ENCODE measurements at regions of chr3 and their contacts with region 1.

Region 1: DNA sequence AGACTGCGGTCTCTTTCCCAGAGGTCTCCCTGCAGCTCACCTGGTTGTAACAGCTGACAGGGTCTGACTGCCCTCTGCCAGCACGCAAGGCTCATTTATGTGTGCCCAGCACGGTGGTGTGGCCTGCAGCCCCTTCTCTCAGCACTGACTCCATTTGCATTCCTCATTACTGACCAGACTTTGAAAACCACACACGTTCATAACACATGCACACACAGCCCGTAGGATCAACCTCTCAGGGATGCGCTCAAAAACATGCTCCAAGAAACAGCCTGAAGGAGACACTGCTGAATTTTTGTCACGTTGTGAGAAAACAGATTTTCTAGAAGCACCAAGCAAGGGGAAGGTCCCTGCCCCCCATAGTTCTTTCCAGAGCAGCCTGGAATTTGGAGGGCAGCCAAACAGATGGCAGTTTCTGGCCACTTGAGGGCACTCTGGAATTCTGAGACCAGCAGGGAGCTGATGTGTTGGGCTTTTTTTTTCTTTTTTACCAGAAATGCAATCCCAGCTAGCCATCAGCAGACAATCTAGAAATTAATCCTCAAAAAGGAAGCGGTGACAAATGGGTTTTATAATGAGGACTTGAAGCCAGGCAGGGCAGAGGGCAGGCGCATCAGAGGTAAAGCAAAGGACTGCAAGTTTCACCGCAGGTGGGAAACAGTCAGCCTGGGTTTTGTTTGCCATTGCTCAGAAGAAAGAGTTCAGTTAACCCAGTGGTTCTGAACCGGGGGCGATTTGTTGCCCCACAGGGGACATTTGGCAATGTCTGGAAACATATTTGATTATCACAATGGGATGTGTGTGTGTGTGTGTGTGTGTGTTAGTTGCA is 170.5 kb upstream of the PROK2 start:
- DNase-seq: peak; percentile 93
- H3K4me3 ChIP-seq: no peak overlapping the region
- H3K27ac ChIP-seq: no peak overlapping the region
- H3K4me1 ChIP-seq: peaks cover 6 to 12% (median 10%) of the 10 kb centered on the region in 4 donors
- H3K27me3 ChIP-seq: no peaks in the 10 kb centered on the region
- CTCF ChIP-seq: peak; percentile 74 to 79 (median 74)
- EP300 ChIP-seq: no peak
- POLR2A ChIP-seq: no peak

Region 2: GRCh38 chr3:71831599-71831998 is 123.9 kb before region 1 on chr3:
- intact Hi-C with region 1: no loop called
- DNase-seq: no peak
- H3K4me3 ChIP-seq: no peak overlapping the region
- H3K27ac ChIP-seq: no peak overlapping the region
- H3K4me1 ChIP-seq: no peaks in the 10 kb centered on the region
- H3K27me3 ChIP-seq: no peaks in the 10 kb centered on the region
- CTCF ChIP-seq: no peak
- EP300 ChIP-seq: no peak
- POLR2A ChIP-seq: no peak

Region 3: DNA sequence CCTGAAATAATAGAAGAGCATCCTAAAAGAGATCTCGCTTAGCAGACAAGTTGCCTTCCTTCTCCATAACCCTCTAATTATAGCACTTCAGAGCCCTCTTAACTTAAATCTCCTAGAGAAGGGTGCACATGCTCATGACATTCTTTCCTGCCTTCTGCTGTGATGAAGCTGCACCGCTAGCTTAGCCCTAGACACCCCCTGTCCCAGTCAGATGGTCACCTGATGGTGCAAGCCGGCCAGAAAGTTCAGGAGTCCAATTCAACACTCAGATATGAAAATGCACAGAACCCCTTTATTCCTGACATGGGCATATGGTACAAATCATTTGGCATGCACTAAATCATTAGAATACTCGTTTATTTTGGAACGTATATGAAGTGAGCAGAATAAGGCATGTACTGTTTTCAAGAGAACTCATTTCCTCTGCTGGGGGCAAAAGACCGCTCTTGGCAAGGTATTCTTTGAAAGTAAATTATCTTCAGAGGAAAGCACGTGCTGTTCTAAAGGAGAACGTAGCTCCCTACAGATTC is 249.9 kb after region 1 on chr3:
- intact Hi-C with region 1: loop called (anchors 10 kb)
- DNase-seq: no peak
- H3K4me3 ChIP-seq: no peak overlapping the region
- H3K27ac ChIP-seq: no peak overlapping the region
- H3K4me1 ChIP-seq: no peaks in the 10 kb centered on the region
- H3K27me3 ChIP-seq: no peaks in the 10 kb centered on the region
- CTCF ChIP-seq: no peak
- EP300 ChIP-seq: no peak
- POLR2A ChIP-seq: no peak

Measured in esophagus muscularis mucosa (tissue), 4 donors.